CD8-positive, alpha-beta T cell (primary cell): ENCODE measurements at regions of chr2 and their contacts with region 1.

Region 1: DNA sequence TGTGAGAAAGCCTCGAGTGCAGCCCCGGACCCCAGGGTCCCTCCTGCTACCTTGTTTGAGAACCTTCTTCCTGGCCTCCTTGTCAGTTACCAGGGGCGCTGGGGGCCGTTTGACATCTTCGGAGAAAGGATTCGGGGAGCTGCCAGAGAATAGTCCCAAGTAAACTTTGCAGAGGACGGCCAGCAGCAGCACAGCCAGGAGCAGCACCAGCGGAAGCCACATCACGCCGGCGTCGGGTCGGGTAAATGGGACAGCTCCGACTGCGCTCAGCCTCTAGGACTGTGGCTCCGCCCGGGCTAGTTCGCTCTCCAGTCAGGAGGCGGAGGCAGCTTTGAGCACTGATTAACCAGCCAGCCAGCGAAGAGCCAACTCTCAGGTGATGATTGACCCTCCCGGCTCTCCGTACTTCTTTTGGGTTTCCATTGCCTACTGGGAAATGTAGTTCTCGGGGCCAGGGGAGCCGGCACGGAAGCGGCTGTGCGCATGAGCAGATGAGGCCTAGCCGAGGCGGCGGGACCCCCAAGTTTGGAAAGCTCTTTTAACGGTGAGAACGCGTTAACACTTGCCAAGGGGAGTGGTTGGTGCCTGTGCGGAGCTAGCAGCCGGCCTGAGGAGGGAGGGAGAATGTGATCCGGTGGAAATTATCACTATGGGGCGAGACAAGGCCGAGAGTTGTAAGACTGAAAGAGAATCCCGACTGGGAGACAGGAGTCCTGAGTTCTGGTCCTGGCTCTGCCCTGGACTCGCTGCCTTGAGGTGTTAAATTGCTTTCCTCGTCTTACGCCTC is at the starts of genes ELMOD3 and RETSAT:
- DNase-seq: peak; percentile 92 to 99 (median 95)
- ATAC-seq: peak; percentile 98
- H3K4me3 ChIP-seq: peak within 1 kb of the TSS; percentile 85 to 94
- H3K4me3 Mint-ChIP-seq: peak within 1 kb of the TSS; percentile 100
- H3K27ac ChIP-seq: peak within 1 kb of the TSS; percentile 82 to 92
- H3K27ac Mint-ChIP-seq: peak within 1 kb of the TSS; percentile 100
- H3K4me1 ChIP-seq: peaks cover 31% of the 10 kb centered on the region
- H3K4me1 Mint-ChIP-seq: peaks cover 51% of the 10 kb centered on the region
- H3K27me3 ChIP-seq: no peaks in the 10 kb centered on the region
- H3K27me3 Mint-ChIP-seq: no peaks in the 10 kb centered on the region
- CTCF ChIP-seq: no peak
- total RNA-seq, gene ELMOD3: 10.8 to 12.1 TPM
- total RNA-seq, gene RETSAT: 19.0 to 19.6 TPM

Region 2: DNA sequence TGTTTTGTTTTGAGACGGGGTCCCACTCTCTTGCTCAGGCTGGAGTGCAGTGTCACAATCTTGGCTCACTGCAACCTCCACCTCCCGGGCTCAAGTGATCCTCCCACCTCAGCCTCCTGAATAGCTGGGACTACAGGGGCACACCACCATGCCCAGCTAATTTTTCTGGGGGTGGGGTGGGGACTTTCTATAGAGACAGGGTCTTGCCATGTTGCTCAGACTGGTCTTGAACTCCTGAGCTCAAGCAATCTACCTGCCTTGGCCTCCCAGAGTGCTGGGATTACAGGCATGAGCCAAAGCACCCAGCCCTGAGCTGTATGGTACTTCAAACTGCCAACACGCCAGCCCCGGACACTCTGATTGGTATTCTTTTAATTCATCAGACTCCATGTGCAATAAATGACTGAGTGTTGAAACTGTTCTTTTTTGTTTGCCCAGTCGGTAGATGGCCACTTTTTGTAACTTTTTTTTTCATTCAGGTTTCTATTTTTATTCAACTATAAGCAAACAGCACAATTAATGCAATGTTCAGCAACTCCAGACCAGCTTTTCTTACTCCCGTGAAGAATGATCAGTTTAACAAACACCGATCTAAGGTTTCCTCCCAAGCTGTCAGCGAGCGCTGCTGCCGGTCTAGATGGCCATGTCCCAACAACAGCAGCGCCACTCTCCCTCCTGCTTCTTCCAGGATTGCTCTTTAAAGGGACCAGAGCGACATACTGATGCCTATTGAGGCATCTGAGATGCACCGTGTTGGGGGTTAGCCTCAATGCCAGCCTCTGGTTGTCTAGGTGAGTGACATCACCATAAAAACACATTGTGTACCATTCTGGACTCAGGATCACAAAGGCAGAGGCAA is 14.2 kb before region 1 on chr2:
- CTCF ChIA-PET with region 1: interaction called, 3 read pairs
- POLR2A ChIA-PET with region 1: interaction called, 10 read pairs
- intact Hi-C with region 1: no loop called
- DNase-seq: no peak
- ATAC-seq: no peak
- H3K4me3 ChIP-seq: no peak overlapping the region
- H3K4me3 Mint-ChIP-seq: no peak overlapping the region
- H3K27ac ChIP-seq: no peak overlapping the region
- H3K27ac Mint-ChIP-seq: no peak overlapping the region
- H3K4me1 ChIP-seq: no peaks in the 10 kb centered on the region
- H3K4me1 Mint-ChIP-seq: no peaks in the 10 kb centered on the region
- H3K27me3 ChIP-seq: no peaks in the 10 kb centered on the region
- H3K27me3 Mint-ChIP-seq: no peaks in the 10 kb centered on the region
- CTCF ChIP-seq: no peak

Region 3: DNA sequence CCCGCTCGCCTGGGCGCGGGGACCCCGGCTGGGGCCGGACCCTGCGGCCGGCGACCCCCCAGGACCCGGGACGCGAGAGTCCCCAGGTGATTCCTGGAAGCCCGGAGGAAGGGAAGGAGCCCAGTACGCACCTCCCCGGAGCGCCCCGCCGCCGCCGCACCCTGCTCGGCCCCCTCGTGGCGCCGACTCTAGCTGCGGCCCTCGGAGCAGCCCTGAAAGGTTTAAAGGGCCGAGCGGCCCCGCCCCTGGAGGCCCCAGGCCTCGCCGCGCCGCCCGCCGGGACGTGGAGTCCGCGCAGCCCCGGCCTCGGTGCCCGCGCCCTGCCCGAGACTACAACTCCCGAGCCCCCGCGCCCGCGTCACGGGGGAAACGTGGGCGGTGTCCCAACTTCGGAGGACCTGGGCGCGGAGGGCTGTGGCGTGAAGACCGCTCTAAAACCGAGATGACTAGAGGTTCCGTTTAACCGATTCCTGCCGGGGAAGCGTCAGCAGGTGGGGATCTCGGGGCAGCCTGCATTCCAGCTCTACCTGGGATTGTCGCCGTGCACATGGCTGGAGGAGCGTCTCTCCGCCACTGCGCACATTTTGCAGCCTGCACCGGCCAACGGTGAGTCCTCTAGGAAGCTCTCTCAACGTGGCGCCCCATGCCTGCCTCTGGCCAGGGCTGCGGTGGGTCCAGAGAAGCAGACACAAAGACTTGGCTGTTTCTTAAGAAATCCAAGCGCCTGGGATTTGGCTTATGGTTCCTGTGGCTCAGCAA is 248.2 kb after region 1 on chr2 and contains the start of gene TMEM150A:
- CTCF ChIA-PET with region 1: no interaction called
- POLR2A ChIA-PET with region 1: interaction called, 3 read pairs
- intact Hi-C with region 1: loop called in 1 of 2 experiments (anchors 1 kb)
- DNase-seq: peak; percentile 71 to 93 (median 87)
- ATAC-seq: peak; percentile 91
- H3K4me3 ChIP-seq: peak within 1 kb of the TSS; percentile 92 to 97
- H3K4me3 Mint-ChIP-seq: peak within 1 kb of the TSS; percentile 91
- H3K27ac ChIP-seq: peak within 1 kb of the TSS; percentile 58 to 67
- H3K27ac Mint-ChIP-seq: peak within 1 kb of the TSS; percentile 89
- H3K4me1 ChIP-seq: peaks cover 27% of the 10 kb centered on the region
- H3K4me1 Mint-ChIP-seq: peaks cover 37% of the 10 kb centered on the region
- H3K27me3 ChIP-seq: no peaks in the 10 kb centered on the region
- H3K27me3 Mint-ChIP-seq: no peaks in the 10 kb centered on the region
- CTCF ChIP-seq: no peak
- total RNA-seq, gene TMEM150A: 5.7 to 6.0 TPM

Region 4: GRCh38 chr2:85611705-85612587 is 257.5 kb after region 1 on chr2 and contains the start of gene C2orf68:
- CTCF ChIA-PET with region 1: no interaction called
- POLR2A ChIA-PET with region 1: interaction called, 3 read pairs
- intact Hi-C with region 1: loop called in 1 of 2 experiments (anchors 5 kb)
- DNase-seq: peak; percentile 49 to 90 (median 83)
- ATAC-seq: peak; percentile 55
- H3K4me3 ChIP-seq: peak within 1 kb of the TSS; percentile 53 to 55
- H3K4me3 Mint-ChIP-seq: peak within 1 kb of the TSS; percentile 97
- H3K27ac ChIP-seq: peak within 1 kb of the TSS; percentile 61 to 70
- H3K27ac Mint-ChIP-seq: peak within 1 kb of the TSS; percentile 95
- H3K4me1 ChIP-seq: peaks cover 26% of the 10 kb centered on the region
- H3K4me1 Mint-ChIP-seq: peaks cover 39% of the 10 kb centered on the region
- H3K27me3 ChIP-seq: no peaks in the 10 kb centered on the region
- H3K27me3 Mint-ChIP-seq: no peaks in the 10 kb centered on the region
- CTCF ChIP-seq: no peak
- total RNA-seq, gene C2orf68: 23.2 to 27.9 TPM

Region 5: GRCh38 chr2:86195055-86195807 is 840.8 kb after region 1 on chr2 and contains the start of gene IMMT:
- CTCF ChIA-PET with region 1: no interaction called
- POLR2A ChIA-PET with region 1: no interaction called
- intact Hi-C with region 1: loop called in 1 of 2 experiments (anchors 10 kb)
- DNase-seq: peak; percentile 79 to 97 (median 93)
- ATAC-seq: peak; percentile 90
- H3K4me3 ChIP-seq: peak within 1 kb of the TSS; percentile 96 to 98
- H3K4me3 Mint-ChIP-seq: peak within 1 kb of the TSS; percentile 89
- H3K27ac ChIP-seq: peak within 1 kb of the TSS; percentile 91 to 98
- H3K27ac Mint-ChIP-seq: peak within 1 kb of the TSS; percentile 90
- H3K4me1 ChIP-seq: peaks cover 37% of the 10 kb centered on the region
- H3K4me1 Mint-ChIP-seq: peaks cover 63% of the 10 kb centered on the region
- H3K27me3 ChIP-seq: no peaks in the 10 kb centered on the region
- H3K27me3 Mint-ChIP-seq: no peaks in the 10 kb centered on the region
- CTCF ChIP-seq: no peak
- total RNA-seq, gene IMMT: 34.3 to 35.8 TPM